Activated CD4-positive, alpha-beta T cell treated with anti-CD3 and anti-CD28 coated beads for 36 hours (primary cell): ENCODE measurements at regions of chr17 and their contacts with region 1.

Region 1: GRCh38 chr17:67245073-67245755 is at the start of gene HELZ:
- DNase-seq: peak; percentile 79
- ATAC-seq: peak; percentile 71
- H3K4me3 Mint-ChIP-seq: peak within 1 kb of the TSS; percentile 94
- H3K27ac Mint-ChIP-seq: peak within 1 kb of the TSS; percentile 85
- H3K4me1 Mint-ChIP-seq: peaks cover 40% of the 10 kb centered on the region
- H3K27me3 Mint-ChIP-seq: peaks cover 2% of the 10 kb centered on the region
- total RNA-seq, gene HELZ: 55.3 to 58.0 TPM

Region 2: GRCh38 chr17:67359960-67360773 is 115.0 kb after region 1 on chr17:
- CTCF ChIA-PET with region 1: interaction called, 3 read pairs
- POLR2A ChIA-PET with region 1: interaction called, 3 read pairs
- intact Hi-C with region 1: loop called in 1 of 2 experiments (anchors 5 kb)
- DNase-seq: peak; percentile 76
- ATAC-seq: peak; percentile 85
- H3K4me3 Mint-ChIP-seq: peak overlapping the region; percentile 47
- H3K27ac Mint-ChIP-seq: peak overlapping the region; percentile 87
- H3K4me1 Mint-ChIP-seq: peaks cover 73% of the 10 kb centered on the region
- H3K27me3 Mint-ChIP-seq: no peaks in the 10 kb centered on the region